ENCODE measurements at regions of chr7 and their contacts with region 1.

Region 1: GRCh38 chr7:1659696-1660095 is 10.4 kb upstream of the ELFN1 start:
- DNase-seq: peak; percentile 98
- H3K4me3 ChIP-seq: no peak overlapping the region
- H3K27ac ChIP-seq: peak overlapping the region; percentile 63
- H3K4me1 ChIP-seq: peaks cover 9% of the 10 kb centered on the region
- H3K27me3 ChIP-seq: peaks cover 6% of the 10 kb centered on the region; the same call in 1 of the 2 replicates

Region 2: GRCh38 chr7:1787241-1787640 is 127.5 kb after region 1 on chr7:
- in situ Hi-C with region 1: no loop called
- DNase-seq: no peak
- H3K4me3 ChIP-seq: no peak overlapping the region
- H3K27ac ChIP-seq: no peak overlapping the region
- H3K4me1 ChIP-seq: no peaks in the 10 kb centered on the region
- H3K27me3 ChIP-seq: peaks cover 9% of the 10 kb centered on the region

Region 3: GRCh38 chr7:2209146-2209960 is 549.7 kb after region 1 on chr7:
- in situ Hi-C with region 1: loop called (anchors 10 kb)
- DNase-seq: peak; percentile 83
- H3K4me3 ChIP-seq: no peak overlapping the region
- H3K27ac ChIP-seq: no peak overlapping the region
- H3K4me1 ChIP-seq: no peaks in the 10 kb centered on the region
- H3K27me3 ChIP-seq: no peaks in the 10 kb centered on the region